ENCODE measurements at regions of chr11 and their contacts with region 1.

Region 1: GRCh38 chr11:94767761-94768601 is at the start of gene AMOTL1:
- DNase-seq: peak; percentile 94 to 97
- ATAC-seq: peak; percentile 83 to 93 (median 84)
- H3K4me3 ChIP-seq: peak within 1 kb of the TSS; percentile 99
- H3K27ac ChIP-seq: peak within 1 kb of the TSS; percentile 99
- H3K4me1 ChIP-seq: peaks cover 51% of the 10 kb centered on the region
- H3K27me3 ChIP-seq: no peaks in the 10 kb centered on the region
- CTCF ChIP-seq: no peak
- total RNA-seq, gene AMOTL1: 225 to 355 (median 292) TPM

Region 2: DNA sequence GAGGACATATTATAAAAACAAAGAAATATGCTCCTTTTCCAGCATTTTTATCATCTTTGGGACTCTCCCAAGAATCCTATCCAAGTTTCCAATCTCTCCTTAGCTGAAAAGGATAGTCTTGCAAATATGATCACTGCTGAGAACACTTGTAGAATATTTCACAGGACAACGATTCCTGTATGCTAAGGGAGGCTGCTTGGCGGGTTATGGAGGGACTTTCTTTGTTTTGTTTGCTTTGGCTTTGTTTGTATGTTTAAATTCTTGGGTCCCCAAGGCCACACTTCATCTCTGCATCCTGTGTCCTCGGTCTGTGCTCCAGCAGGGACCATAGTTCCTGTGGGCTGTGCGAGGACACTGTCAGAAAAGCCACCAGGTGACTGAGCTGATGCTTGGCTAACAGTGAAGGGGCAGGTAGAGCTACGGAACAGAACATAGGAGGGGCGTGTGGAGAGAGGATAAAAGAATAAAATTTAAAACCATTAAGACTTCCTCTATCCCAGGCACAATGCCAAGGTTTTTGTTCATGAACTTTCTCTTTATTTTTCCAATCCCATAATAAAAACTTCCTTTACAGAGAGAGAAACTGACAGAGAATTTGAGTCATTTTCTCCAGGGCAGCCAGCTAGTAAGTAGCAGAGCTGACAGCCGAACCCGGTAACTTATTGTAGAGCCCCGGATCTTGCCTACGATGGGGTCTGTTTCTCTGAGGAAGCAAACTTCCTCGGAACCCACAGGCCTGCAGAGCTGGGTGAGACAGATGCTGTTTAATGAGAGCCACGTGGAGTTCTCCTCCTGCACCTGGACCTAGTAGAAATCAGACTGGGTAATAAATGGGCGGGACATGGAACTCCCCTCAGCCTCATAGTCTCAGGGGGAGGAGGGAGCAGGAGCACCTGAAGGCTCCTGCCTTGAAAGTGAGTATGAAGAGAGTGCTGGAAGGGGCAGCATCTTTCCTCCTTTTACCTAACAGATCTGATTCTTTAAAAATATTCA is 463.7 kb before region 1 on chr11 and contains the start of gene IZUMO1R:
- intact Hi-C with region 1: no loop called
- DNase-seq: no peak
- ATAC-seq: no peak
- H3K4me3 ChIP-seq: no peak within 1 kb of the TSS
- H3K27ac ChIP-seq: no peak within 1 kb of the TSS
- H3K4me1 ChIP-seq: no peaks in the 10 kb centered on the region
- H3K27me3 ChIP-seq: no peaks in the 10 kb centered on the region
- CTCF ChIP-seq: no peak
- total RNA-seq, gene IZUMO1R: not detected

Region 3: DNA sequence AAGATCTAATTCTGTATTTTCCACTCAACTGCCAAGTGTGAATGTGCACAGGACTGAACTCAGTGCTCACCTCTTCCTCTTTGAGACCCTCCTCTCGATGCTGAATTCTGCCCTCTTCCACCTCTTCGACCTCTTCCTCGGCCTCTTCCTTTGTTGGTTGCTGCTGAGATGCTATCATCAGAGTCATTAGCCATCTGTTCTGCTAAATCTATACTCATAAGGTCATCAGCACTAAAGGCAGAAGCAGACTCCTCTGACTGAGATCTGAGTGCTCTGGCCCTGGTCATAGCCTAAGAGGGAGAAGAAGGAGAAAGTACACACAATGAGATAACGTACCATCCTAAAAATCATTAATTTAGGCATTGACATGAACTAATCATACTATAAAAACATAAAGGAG is 320.8 kb before region 1 on chr11:
- intact Hi-C with region 1: no loop called
- DNase-seq: no peak
- ATAC-seq: no peak
- H3K4me3 ChIP-seq: no peak overlapping the region
- H3K27ac ChIP-seq: no peak overlapping the region
- H3K4me1 ChIP-seq: no peaks in the 10 kb centered on the region
- H3K27me3 ChIP-seq: no peaks in the 10 kb centered on the region
- CTCF ChIP-seq: no peak

Region 4: DNA sequence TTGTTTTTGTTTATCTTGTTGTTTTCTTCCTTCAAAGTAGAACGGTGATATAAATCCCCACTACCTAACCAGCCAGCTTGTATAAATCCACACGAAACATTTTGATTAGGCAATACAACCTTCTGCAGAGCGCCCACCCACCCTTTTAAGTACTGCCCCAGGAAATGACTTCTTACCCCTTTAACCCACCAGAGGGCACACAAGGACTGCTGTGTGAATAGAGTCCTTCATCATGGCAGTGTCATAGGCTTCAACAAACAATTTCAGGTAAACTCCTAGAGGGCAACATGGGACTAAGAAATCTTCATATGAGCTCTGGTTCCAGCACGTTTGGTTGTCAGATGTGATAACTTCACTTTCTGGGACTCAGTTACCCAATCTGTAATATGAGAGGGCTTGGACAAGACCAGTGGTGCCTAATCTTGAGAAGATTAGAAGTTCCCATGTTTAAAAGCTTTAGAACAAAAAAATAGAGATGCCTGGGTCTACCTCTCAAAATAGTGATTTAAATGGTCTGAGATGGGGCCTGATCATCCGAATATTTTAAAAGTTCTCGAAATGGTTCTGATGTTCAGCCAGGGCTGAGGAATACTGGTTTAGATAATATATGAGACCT is 144.8 kb before region 1 on chr11:
- intact Hi-C with region 1: loop called (anchors 5 kb)
- DNase-seq: no peak
- ATAC-seq: peak; percentile 96 to 98 (median 98)
- H3K4me3 ChIP-seq: no peak overlapping the region
- H3K27ac ChIP-seq: no peak overlapping the region
- H3K4me1 ChIP-seq: no peaks in the 10 kb centered on the region
- H3K27me3 ChIP-seq: no peaks in the 10 kb centered on the region
- CTCF ChIP-seq: peak; percentile 88

Region 5: DNA sequence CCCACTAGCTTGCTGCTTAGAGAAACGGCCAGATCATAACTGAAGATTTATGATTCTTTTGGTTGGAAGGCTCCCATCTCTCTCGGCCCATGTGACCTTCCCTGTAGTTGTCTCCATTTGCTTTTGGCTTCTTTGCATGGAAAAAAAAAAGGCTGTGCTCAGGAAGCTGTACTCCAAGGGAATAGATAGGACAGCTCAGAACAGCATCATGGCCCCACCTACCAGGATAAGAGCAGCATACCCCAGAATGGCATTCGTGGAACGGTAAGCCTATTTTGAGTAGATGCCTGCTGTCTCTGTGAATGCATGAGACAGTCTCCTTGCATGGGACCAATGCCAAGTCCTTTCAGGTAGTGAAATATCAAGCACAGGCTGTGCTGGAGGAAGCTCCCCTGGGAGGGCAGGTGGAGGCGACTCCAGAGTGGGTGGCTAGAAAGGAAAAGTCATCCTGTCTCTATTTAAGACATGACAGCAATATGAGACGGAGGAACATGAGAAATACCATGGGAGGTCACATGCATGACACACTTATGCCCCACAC is 94.0 kb before region 1 on chr11:
- intact Hi-C with region 1: loop called in 1 of 2 experiments (anchors 10 kb)
- DNase-seq: peak; percentile 35 to 88
- ATAC-seq: peak; percentile 77 to 87 (median 86)
- H3K4me3 ChIP-seq: no peak overlapping the region
- H3K27ac ChIP-seq: peak overlapping the region; percentile 88
- H3K4me1 ChIP-seq: peaks cover 44% of the 10 kb centered on the region
- H3K27me3 ChIP-seq: no peaks in the 10 kb centered on the region
- CTCF ChIP-seq: no peak

Region 6: GRCh38 chr11:94705896-94706615 is 61.9 kb before region 1 on chr11:
- intact Hi-C with region 1: loop called in 1 of 2 experiments (anchors 2 kb)
- DNase-seq: peak in 1 of 2 donors; percentile 64
- ATAC-seq: peak; percentile 86 to 93 (median 87)
- H3K4me3 ChIP-seq: peak overlapping the region; percentile 80
- H3K27ac ChIP-seq: peak overlapping the region; percentile 95
- H3K4me1 ChIP-seq: peaks cover 35% of the 10 kb centered on the region
- H3K27me3 ChIP-seq: no peaks in the 10 kb centered on the region
- CTCF ChIP-seq: no peak

Region 7: GRCh38 chr11:94721565-94722292 is 46.3 kb before region 1 on chr11:
- intact Hi-C with region 1: no loop called
- DNase-seq: no peak
- ATAC-seq: peak; percentile 60 to 94 (median 86)
- H3K4me3 ChIP-seq: no peak overlapping the region
- H3K27ac ChIP-seq: peak overlapping the region; percentile 33
- H3K4me1 ChIP-seq: peaks cover 27% of the 10 kb centered on the region
- H3K27me3 ChIP-seq: no peaks in the 10 kb centered on the region
- CTCF ChIP-seq: no peak

Region 8: DNA sequence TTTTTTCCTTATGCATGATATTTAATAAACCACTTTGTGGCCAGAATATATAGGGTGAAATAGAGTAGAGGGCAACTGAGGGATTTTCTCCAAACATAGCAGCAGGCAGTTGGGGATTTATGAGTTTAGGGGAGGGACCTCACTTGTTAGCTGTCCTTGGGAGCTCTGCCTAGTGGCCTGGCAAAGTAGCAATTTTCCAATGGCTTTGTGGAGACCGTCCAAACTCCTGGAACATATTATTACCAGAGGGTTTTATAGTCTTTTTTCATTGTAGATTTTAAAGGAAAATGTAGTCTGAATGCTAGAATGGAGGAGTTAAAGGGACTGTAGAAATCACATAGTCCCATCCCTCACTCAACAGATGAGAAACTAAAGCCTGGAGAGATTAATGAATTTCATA is 32.4 kb after region 1 on chr11:
- intact Hi-C with region 1: loop called in 1 of 2 experiments (anchors 2 kb)
- DNase-seq: no peak
- ATAC-seq: peak in 1 of 4 donors; percentile 32
- H3K4me3 ChIP-seq: no peak overlapping the region
- H3K27ac ChIP-seq: peak overlapping the region; percentile 92
- H3K4me1 ChIP-seq: peaks cover 95% of the 10 kb centered on the region
- H3K27me3 ChIP-seq: no peaks in the 10 kb centered on the region
- CTCF ChIP-seq: no peak

Region 9: DNA sequence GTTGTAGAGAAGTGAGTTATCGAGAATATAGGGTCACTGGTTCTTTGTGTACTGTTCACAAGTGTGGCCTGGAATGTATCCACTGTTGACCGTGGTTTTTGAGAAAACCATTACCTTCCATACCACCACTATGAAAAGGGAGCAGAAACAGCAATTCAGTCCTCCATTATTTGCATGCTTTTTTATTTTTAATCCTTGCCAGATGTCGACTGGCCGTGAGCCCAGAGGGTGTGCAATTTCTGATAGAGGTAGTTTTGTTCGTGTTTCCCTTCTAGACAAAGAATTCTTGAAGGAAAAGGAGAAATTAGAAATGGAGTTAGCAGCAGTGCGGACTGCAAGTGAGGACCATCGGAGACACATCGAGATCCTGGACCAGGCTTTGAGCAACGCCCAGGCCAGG is 81.9 kb after region 1 on chr11:
- intact Hi-C with region 1: loop called in 1 of 2 experiments (anchors 5 kb)
- DNase-seq: no peak
- ATAC-seq: no peak
- H3K4me3 ChIP-seq: no peak overlapping the region
- H3K27ac ChIP-seq: peak overlapping the region; percentile 78
- H3K4me1 ChIP-seq: peaks cover 33% of the 10 kb centered on the region
- H3K27me3 ChIP-seq: no peaks in the 10 kb centered on the region
- CTCF ChIP-seq: no peak

Measured in psoas muscle (tissue), 8 donors.